ENCODE measurements at regions of chr7 and their contacts with region 1.

Region 1: GRCh38 chr7:43108255-43109011 is 4.0 kb upstream of the HECW1 start:
- DNase-seq: no peak
- H3K4me3 ChIP-seq: no peak overlapping the region
- H3K27me3 ChIP-seq: peaks cover 16% of the 10 kb centered on the region
- CTCF ChIP-seq: peak; percentile 96

Region 2: GRCh38 chr7:42960762-42961161 is 147.7 kb before region 1 on chr7:
- CTCF ChIA-PET with region 1: no interaction called
- POLR2A ChIA-PET with region 1: no interaction called
- DNase-seq: no peak
- H3K4me3 ChIP-seq: no peak overlapping the region
- H3K27me3 ChIP-seq: peaks cover 5% of the 10 kb centered on the region; the same call in 1 of the 2 replicates
- CTCF ChIP-seq: no peak

Region 3: DNA sequence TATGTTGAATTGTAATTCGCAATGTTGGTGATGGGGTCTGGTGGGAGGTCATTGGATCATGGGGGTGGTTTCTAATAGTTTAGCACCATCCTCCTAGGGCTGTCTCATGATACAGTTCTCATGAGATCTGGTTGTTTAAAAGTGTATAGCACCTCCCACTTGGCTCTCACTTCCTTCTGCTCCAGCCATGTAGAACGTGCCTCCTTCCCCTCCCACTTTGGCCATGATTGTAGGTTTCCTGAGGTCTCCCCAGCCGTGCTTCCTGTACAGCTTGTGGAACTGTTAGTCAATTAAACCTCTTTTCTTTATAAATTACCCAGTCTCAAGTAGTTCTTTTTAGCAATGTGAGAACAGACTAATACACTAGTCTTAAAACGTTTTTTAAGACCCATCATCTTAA is 11.6 kb before region 1 on chr7:
- CTCF ChIA-PET with region 1: interaction called, 10 read pairs
- POLR2A ChIA-PET with region 1: interaction called, 3 read pairs
- DNase-seq: no peak
- H3K4me3 ChIP-seq: no peak overlapping the region
- H3K27me3 ChIP-seq: no peaks in the 10 kb centered on the region
- CTCF ChIP-seq: no peak

Region 4: DNA sequence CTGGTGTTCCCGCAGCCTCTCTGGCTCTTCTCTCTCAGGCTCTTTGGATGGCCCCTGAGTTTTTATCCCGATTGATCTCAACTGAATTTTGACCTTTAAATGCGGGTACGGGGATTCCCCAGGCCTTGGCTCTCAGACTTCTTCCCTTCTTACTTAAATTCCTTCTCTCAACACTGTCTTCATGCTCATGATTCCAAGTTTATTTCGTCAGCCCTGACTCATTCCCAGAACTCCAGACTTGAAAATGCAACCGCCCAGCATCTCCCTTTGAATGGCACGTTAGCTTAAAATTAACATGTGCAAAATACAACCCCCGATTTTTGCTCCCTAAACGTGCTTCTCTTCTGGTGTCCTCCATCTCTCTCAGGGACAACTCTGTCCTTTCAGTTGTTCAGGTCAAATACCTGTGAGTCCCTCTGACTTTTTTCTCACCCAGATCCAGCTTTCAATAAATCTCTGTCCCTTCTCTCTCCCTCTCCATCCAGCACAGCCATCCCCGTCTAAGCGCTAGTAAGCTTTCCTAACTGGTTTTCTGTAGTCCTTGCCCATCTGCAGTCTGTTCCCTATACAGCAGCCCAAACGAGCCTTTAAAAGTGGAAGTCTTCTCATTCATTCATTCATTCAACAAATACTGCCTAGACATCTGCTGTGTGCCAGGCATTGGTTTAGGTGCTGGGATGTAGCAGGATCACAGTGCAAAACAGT is 11.1 kb after region 1 on chr7:
- CTCF ChIA-PET with region 1: interaction called, 15 read pairs
- POLR2A ChIA-PET with region 1: no interaction called
- DNase-seq: peak; percentile 65
- H3K4me3 ChIP-seq: no peak overlapping the region
- H3K27me3 ChIP-seq: peaks cover 5% of the 10 kb centered on the region
- CTCF ChIP-seq: no peak